ENCODE measurements at regions of chr5 and their contacts with region 1.

Region 1: GRCh38 chr5:151164686-151165392 is 7.3 kb upstream of the ANXA6 start:
- DNase-seq: peak; percentile 65
- H3K4me3 Mint-ChIP-seq: no peak overlapping the region
- H3K27ac Mint-ChIP-seq: no peak overlapping the region
- H3K4me1 Mint-ChIP-seq: peaks cover 14% of the 10 kb centered on the region
- H3K27me3 Mint-ChIP-seq: peaks cover 4% of the 10 kb centered on the region

Region 2: DNA sequence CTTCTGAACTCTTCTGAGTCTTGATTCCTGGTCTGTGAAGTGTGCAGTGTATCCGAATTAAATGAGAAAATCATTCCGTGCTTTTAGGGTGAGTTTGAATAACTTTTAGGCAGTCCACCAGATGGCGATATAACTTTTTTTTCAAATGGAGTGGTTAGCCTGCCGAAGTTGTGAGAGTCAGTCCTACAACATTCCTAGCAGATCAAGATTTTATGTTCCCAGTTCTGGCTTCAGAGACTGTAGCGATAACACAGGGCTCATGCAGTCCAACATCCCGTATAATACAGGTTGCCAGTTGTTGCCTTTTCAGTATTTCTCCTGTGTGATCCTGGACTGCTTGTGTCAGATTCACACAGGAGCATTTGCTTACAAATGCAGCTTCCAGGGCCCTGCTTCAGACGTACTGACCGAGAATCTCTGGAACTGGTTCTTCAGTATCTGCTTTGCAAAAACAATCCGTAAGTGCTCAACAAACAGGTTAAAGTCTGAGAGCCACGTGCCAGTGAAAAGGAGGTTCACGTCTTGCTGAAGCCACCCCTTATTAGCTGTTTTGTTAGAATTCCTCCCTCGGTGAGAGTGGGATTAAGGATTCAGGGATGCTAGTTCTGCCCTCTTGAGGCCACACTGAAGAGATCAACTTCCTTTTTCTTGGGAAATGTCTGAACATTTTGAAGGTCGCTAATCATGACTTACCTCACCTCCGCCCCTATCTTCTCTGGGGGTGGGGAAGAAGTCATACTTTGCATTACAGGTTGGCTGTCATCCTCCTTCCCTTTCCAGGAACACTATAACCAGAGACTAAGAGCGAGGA is 363.5 kb before region 1 on chr5:
- intact Hi-C with region 1: loop called (anchors 1 kb)
- DNase-seq: no peak
- H3K4me3 Mint-ChIP-seq: no peak overlapping the region
- H3K27ac Mint-ChIP-seq: no peak overlapping the region
- H3K4me1 Mint-ChIP-seq: peaks cover 20% of the 10 kb centered on the region
- H3K27me3 Mint-ChIP-seq: peaks cover 3% of the 10 kb centered on the region

Region 3: DNA sequence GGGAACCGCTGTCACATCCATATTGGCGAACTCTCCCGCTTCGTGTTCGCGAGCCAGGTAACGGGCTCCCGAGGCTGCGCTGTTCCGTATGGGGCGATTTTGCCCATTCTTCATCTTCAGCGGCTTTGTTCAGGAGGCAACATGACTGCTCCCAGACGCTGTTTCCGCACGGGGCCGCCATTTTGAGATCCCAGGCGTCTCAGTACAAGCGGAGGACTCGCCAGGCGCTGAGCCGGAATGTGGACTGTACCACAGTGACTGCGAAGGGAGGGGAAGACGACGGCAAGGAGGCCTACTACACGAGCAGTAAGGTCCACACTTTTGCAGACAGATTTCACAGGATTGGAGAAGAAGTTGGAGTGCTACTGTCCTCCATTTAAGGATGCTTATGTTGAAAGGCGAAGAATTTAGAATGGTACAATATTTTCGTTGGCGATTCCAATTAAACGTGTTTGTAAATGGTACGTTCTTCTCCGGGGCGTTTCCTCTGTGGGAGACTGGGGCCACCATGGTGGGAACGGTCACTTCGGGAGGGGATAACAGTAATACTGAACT is 218.4 kb before region 1 on chr5:
- intact Hi-C with region 1: no loop called
- DNase-seq: no peak
- H3K4me3 Mint-ChIP-seq: no peak overlapping the region
- H3K27ac Mint-ChIP-seq: no peak overlapping the region
- H3K4me1 Mint-ChIP-seq: no peaks in the 10 kb centered on the region
- H3K27me3 Mint-ChIP-seq: no peaks in the 10 kb centered on the region

Region 4: DNA sequence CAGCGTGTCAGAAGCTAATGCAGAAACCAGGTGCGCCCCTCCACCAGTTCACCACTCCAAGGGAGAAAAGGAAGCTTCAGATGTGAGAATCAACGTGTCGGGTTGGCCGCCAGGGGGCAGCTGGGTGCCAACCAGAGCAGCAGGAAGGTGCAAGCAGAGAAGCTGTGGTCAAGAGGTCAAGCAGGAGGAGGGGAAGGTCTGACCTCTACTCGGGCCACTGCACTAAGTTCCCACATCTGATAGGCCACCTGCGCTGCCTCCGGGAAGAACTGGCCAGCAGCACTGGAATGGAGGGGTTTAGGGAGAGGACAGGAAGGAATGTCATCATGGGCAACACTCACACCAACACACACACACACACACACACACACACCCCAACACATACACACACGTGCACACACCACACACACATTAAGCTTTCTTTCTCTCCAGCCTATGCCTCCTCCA is 38.6 kb before region 1 on chr5:
- intact Hi-C with region 1: loop called (anchors 1 kb)
- DNase-seq: peak; percentile 38
- H3K4me3 Mint-ChIP-seq: no peak overlapping the region
- H3K27ac Mint-ChIP-seq: peak overlapping the region; percentile 42
- H3K4me1 Mint-ChIP-seq: peaks cover 43% of the 10 kb centered on the region
- H3K27me3 Mint-ChIP-seq: no peaks in the 10 kb centered on the region

Region 5: GRCh38 chr5:151223469-151224264 is 58.8 kb after region 1 on chr5 and contains the start of gene CCDC69:
- intact Hi-C with region 1: loop called (anchors 2 kb)
- DNase-seq: peak; percentile 43
- H3K4me3 Mint-ChIP-seq: peak within 1 kb of the TSS; percentile 77
- H3K27ac Mint-ChIP-seq: peak within 1 kb of the TSS; percentile 78
- H3K4me1 Mint-ChIP-seq: peaks cover 49% of the 10 kb centered on the region
- H3K27me3 Mint-ChIP-seq: no peaks in the 10 kb centered on the region
- total RNA-seq, gene CCDC69: 24.3 and 25.4 TPM in 2 replicates

Region 6: GRCh38 chr5:151298063-151298855 is 133.4 kb after region 1 on chr5:
- intact Hi-C with region 1: loop called (anchors 1 kb)
- DNase-seq: peak; percentile 5
- H3K4me3 Mint-ChIP-seq: no peak overlapping the region
- H3K27ac Mint-ChIP-seq: no peak overlapping the region
- H3K4me1 Mint-ChIP-seq: peaks cover 15% of the 10 kb centered on the region
- H3K27me3 Mint-ChIP-seq: peaks cover 12% of the 10 kb centered on the region